WTC11 (cell line): ENCODE measurements at regions of chr7 and their contacts with region 1.

Region 1: DNA sequence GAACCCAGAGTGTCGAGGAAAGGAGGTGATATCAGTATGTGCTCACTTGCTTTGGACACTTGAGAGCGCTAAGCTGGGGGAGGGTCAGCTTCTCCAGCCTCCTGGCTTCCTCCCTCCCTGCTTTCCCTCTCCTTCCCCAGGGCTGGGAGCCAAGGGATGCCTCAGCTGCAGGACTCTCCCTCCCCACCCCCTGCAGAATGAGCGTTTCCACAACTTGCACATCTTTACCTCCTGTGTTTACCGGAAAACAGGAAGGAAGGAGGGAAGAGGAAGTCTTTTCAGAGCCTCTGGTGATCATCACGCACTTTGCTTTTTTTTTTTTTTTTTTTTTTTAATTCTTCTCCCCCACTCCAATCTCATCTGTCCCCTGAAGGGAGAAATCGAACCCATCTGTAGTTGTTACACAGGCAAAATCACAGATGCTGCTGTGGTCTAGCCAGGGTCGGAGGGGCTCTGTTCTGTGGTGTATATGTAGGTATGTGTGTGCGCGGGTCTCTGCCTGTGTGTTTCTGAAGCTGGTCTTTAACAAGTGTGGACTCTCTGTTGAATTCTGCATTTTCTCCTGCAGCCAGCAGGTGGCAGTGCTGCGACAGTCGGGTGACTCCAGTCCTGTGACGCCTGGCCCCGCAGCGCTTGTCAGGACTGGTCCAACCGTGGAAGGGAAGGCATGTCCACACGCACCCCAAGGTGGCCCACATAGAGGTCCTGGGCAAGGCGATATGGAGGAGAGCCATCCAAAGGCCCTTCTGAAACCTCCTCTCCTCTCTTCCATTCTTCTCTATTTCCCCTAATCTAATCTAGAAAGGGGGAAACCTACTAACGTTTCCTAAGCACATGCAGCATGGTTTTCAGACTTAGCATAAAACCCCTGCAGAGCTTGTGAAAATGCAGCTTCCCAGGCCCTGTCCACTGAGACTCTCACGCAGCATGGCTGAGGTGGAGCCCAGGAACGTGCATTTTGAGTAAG is 257.6 kb downstream of the PLXNA4 start:
- DNase-seq: peak; percentile 87
- ATAC-seq: peak; percentile 95
- H3K4me3 Mint-ChIP-seq: peak overlapping the region; percentile 62
- H3K27ac Mint-ChIP-seq: no peak overlapping the region
- H3K4me1 Mint-ChIP-seq: peaks cover 17% of the 10 kb centered on the region
- H3K27me3 Mint-ChIP-seq: peaks cover 11% of the 10 kb centered on the region
- CTCF ChIP-seq: peak; percentile 73

Region 2: DNA sequence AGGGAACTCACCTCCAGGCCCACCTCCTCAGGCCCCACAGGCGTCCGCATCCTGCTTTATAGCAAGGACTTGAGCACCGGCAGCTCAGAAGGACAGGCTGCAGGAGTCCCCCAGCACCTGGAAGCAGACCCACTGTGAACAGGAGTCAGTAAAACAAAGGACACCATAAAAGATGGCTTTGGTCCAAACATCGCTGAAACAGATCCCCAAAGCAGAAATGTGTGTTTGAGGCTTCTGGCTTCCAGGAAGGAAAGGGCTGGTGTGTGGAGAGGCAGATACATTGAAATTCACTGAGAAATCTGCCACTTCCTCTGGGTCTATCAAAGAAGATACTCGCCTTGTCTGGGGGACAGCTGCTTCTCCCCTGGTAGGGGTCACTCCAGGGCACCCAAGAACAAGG is 28.6 kb before region 1 on chr7:
- CTCF ChIA-PET with region 1: interaction called, 11 read pairs
- POLR2A ChIA-PET with region 1: no interaction called
- DNase-seq: no peak
- ATAC-seq: no peak
- H3K4me3 Mint-ChIP-seq: no peak overlapping the region
- H3K27ac Mint-ChIP-seq: no peak overlapping the region
- H3K4me1 Mint-ChIP-seq: no peaks in the 10 kb centered on the region
- H3K27me3 Mint-ChIP-seq: no peaks in the 10 kb centered on the region
- CTCF ChIP-seq: no peak

Region 3: DNA sequence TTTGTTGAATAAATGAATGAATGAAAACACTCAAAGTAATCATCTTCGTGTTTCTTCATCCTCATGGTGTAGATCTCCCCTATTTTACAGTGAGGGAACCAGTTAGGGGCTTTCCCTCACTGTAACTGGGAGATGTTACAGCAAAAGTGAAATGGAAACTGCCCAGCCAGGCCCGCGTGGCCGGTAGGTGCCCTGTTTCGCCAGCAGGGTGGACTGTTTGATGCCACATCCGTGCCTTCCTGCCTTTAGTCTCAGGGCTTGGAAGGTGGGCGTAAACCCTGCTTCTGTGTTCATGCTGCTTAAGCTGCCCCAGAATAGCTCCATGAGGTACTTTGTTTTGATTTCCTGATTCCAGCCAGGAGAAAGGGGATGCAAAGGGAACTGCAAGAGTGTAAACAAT is 11.2 kb before region 1 on chr7:
- CTCF ChIA-PET with region 1: interaction called, 31 read pairs
- POLR2A ChIA-PET with region 1: no interaction called
- DNase-seq: peak; percentile 26
- ATAC-seq: peak; percentile 63
- H3K4me3 Mint-ChIP-seq: no peak overlapping the region
- H3K27ac Mint-ChIP-seq: no peak overlapping the region
- H3K4me1 Mint-ChIP-seq: no peaks in the 10 kb centered on the region
- H3K27me3 Mint-ChIP-seq: no peaks in the 10 kb centered on the region
- CTCF ChIP-seq: no peak

Region 4: DNA sequence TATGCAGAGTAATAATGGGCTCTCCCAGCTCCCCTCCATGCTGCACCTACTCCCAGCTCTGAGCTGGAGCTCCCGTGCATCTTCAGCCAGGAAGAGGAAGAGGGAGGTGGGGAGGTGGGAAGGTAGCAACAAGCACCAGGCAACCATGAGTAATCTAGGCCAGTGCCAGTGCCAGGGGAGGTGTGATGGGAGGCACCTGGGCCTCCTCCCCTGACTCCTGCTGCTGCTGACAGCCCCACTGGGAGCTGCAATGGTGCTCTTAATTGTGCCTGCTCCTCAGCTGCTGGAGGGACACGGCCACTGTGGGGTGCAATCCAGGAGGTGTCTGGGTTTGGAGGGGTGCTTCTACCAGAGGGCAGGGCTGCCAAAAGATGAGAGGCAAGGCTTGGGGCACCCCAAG is 14.7 kb after region 1 on chr7:
- CTCF ChIA-PET with region 1: interaction called, 10 read pairs
- POLR2A ChIA-PET with region 1: no interaction called
- DNase-seq: no peak
- ATAC-seq: no peak
- H3K4me3 Mint-ChIP-seq: no peak overlapping the region
- H3K27ac Mint-ChIP-seq: no peak overlapping the region
- H3K4me1 Mint-ChIP-seq: peaks cover 4% of the 10 kb centered on the region; the same call in 1 of the 2 replicates
- H3K27me3 Mint-ChIP-seq: no peaks in the 10 kb centered on the region
- CTCF ChIP-seq: no peak